Mammary epithelial cell (primary cell): ENCODE measurements at regions of chr2 and their contacts with region 1.

Region 1: DNA sequence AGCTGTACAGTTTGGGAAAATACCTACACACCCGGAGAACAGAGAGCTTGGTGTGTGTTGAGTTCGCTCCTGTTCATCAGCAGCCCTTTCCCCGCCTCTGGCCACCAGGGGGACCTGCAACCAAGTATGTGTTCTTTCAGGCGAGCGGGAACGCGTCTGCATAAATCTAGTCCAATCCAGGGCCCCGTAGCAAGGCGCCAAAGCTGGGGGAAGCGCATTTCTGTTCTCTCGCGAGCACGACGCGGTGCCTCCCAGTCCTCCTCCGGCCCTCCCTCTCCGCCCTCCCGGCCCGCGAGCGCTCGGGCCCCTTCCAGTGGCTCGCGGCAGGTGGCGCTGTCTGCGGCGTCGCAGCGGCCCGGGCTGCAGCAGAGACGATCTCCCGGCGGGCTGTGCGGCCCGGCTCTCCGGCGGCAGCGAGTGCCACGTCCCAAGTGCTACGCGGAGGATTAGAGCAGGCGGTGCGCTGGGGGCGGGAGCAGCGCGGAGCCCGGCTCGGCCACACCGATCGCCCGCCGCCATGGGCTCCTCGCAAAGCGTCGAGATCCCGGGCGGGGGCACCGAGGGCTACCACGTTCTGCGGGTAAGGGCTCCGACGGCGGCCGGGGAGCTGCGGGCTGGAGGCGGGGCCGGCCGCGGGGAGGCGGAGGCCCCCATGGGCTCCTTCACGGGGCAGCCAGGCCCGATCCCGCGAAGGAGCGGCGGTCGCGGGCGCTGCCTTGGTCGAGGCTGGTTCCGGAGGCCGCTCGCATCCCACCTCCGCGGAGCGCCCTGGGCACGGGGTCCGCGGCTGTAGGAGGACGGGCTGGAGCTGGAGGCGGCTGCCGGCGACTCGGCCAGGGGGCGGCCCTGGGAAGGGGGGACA is at the start of gene GORASP2:
- DNase-seq: peak; percentile 99
- H3K4me3 ChIP-seq: peak within 1 kb of the TSS; percentile 54 to 86 (median 85)
- H3K27ac ChIP-seq: peak within 1 kb of the TSS; percentile 89
- H3K4me1 ChIP-seq: peaks cover 14% of the 10 kb centered on the region
- H3K27me3 ChIP-seq: no peaks in the 10 kb centered on the region
- CTCF ChIP-seq: peak; percentile 85
- total RNA-seq, gene GORASP2: 63.3 to 94.9 TPM

Region 2: GRCh38 chr2:171244970-171245782 is 316.1 kb after region 1 on chr2:
- CTCF ChIA-PET with region 1: no interaction called
- dilution Hi-C with region 1: no loop called
- in situ Hi-C with region 1: no loop called
- intact Hi-C with region 1: loop called (anchors 1 kb)
- DNase-seq: peak; percentile 37
- H3K4me3 ChIP-seq: no peak overlapping the region
- H3K27ac ChIP-seq: no peak overlapping the region
- H3K4me1 ChIP-seq: peaks cover 5% of the 10 kb centered on the region
- H3K27me3 ChIP-seq: no peaks in the 10 kb centered on the region
- CTCF ChIP-seq: peak; percentile 9 to 35